IMR-90 (cell line): ENCODE measurements at regions of chr22 and their contacts with region 1.

Region 1: DNA sequence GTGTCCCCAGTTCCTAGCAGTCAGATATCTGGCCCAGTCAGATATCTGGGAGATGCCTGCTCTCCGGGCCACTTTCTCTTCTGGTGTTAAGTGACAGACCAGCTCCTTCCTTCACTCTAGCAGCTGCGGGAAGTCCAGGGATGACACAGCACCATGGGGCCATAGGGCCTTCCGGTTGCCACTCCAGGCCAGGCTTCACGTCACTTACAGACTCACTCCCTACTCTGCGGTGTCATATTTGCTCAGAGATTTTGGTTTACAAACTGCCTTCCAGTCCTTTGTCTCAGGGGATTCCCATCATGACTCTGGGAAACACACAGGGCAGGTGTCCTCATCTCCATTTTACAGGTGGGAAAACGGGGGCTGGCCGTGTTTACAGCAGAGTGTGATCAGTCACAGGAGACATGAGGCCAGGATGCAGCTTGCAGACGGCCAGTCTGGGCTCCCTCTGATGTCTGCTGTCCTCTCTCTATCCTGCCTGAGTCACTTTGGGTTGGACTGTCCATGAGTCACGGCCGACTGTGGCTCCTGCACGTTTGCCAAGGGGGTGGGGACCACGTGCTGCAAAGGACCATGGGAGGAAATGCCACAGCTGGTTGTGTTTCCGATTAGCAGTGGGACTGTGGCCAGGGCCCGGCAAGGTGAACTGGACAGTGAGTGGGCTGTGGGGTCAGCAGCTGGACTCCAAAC is 8.2 kb upstream of the TBC1D22A start:
- DNase-seq: peak; percentile 99
- ATAC-seq: peak; percentile 88
- H3K4me3 ChIP-seq: no peak overlapping the region; the same call in 1 of the 2 replicates
- H3K27ac ChIP-seq: peak overlapping the region; percentile 90
- H3K4me1 ChIP-seq: peaks cover 30% of the 10 kb centered on the region
- H3K27me3 ChIP-seq: no peaks in the 10 kb centered on the region
- CTCF ChIP-seq: no peak
- POLR2A ChIP-seq: peak; percentile 80
- RAD21 ChIP-seq: no peak

Region 2: DNA sequence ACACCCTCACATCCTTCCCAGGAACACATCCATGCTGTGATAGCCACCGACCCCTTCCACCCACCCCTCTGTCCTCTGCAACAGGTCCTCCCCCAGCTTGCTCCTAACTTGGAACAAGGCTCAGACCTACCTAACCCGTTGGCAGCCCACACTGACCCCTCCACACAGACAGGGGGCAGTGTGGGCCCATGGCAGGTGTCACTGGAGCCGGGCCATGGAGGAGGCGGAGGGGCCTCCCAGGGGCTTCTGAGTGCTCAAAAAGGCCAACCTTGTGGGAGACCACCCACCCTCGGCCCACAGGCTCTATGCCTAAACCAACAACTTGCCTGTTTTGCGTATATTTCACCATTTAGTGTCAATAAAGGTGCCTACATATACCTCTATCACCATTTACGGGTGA is 73.2 kb before region 1 on chr22:
- CTCF ChIA-PET with region 1: no interaction called
- POLR2A ChIA-PET with region 1: no interaction called
- dilution Hi-C with region 1: no loop called
- in situ Hi-C with region 1: no loop called
- intact Hi-C with region 1: no loop called
- DNase-seq: no peak
- ATAC-seq: no peak
- H3K4me3 ChIP-seq: no peak overlapping the region
- H3K27ac ChIP-seq: no peak overlapping the region
- H3K4me1 ChIP-seq: peaks cover 14% of the 10 kb centered on the region
- H3K27me3 ChIP-seq: no peaks in the 10 kb centered on the region
- CTCF ChIP-seq: 0 out of 2 replicates have a peak, but pooled peaks have one; percentile 9
- POLR2A ChIP-seq: no peak
- RAD21 ChIP-seq: no peak

Region 3: GRCh38 chr22:46815896-46816731 is 61.9 kb after region 1 on chr22:
- CTCF ChIA-PET with region 1: no interaction called
- POLR2A ChIA-PET with region 1: no interaction called
- dilution Hi-C with region 1: no loop called
- in situ Hi-C with region 1: no loop called
- intact Hi-C with region 1: loop called (anchors 2 kb)
- DNase-seq: peak; percentile 66
- ATAC-seq: peak; percentile 89
- H3K4me3 ChIP-seq: no peak overlapping the region
- H3K27ac ChIP-seq: peak overlapping the region; percentile 37
- H3K4me1 ChIP-seq: peaks cover 14% of the 10 kb centered on the region
- H3K27me3 ChIP-seq: no peaks in the 10 kb centered on the region
- CTCF ChIP-seq: no peak
- POLR2A ChIP-seq: no peak
- RAD21 ChIP-seq: no peak